ENCODE measurements at regions of chr14 and their contacts with region 1.

Region 1: GRCh38 chr14:91164685-91165084 is 50.8 kb downstream of the DGLUCY start:
- DNase-seq: no peak
- H3K4me3 ChIP-seq: no peak overlapping the region
- H3K27ac ChIP-seq: peak overlapping the region; percentile 39 to 63 (median 59)
- H3K4me1 ChIP-seq: peaks cover 4 to 20% (median 8%) of the 10 kb centered on the region in 3 donors
- H3K27me3 ChIP-seq: no peaks in the 10 kb centered on the region
- CTCF ChIP-seq: no peak
- POLR2A ChIP-seq: no peak

Region 2: GRCh38 chr14:90911121-90911520 is 253.6 kb before region 1 on chr14:
- intact Hi-C with region 1: loop called (anchors 5 kb)
- DNase-seq: no peak
- H3K4me3 ChIP-seq: no peak overlapping the region
- H3K27ac ChIP-seq: no peak overlapping the region
- H3K4me1 ChIP-seq: no peaks in the 10 kb centered on the region
- H3K27me3 ChIP-seq: no peaks in the 10 kb centered on the region
- CTCF ChIP-seq: no peak
- POLR2A ChIP-seq: no peak